Right ventricle myocardium superior (tissue), 1 donor: ENCODE measurements at regions of chrX and their contacts with region 1.

Region 1: GRCh38 chrX:108091266-108091877 is at the starts of genes ATG4A and PSMD10:
- DNase-seq: peak; percentile 95
- ATAC-seq: peak; percentile 99
- total RNA-seq, gene ATG4A: 18.0 TPM
- total RNA-seq, gene PSMD10: 17.9 TPM

Region 2: GRCh38 chrX:108131471-108131870 is 40.1 kb after region 1 on chrX:
- intact Hi-C with region 1: loop called (anchors 5 kb)
- DNase-seq: no peak
- ATAC-seq: no peak